Activated CD4-positive, alpha-beta T cell treated with anti-CD3 and anti-CD28 coated beads for 36 hours (primary cell): ENCODE measurements at regions of chr3 and their contacts with region 1.

Region 1: GRCh38 chr3:132180337-132180791 is 136.8 kb upstream of the ACP3 start:
- DNase-seq: no peak
- ATAC-seq: peak; percentile 30
- H3K4me3 Mint-ChIP-seq: no peak overlapping the region
- H3K27ac Mint-ChIP-seq: no peak overlapping the region
- H3K4me1 Mint-ChIP-seq: peaks cover 3% of the 10 kb centered on the region
- H3K27me3 Mint-ChIP-seq: peaks cover 6% of the 10 kb centered on the region

Region 2: GRCh38 chr3:131549340-131549739 is 631.0 kb before region 1 on chr3:
- CTCF ChIA-PET with region 1: no interaction called
- POLR2A ChIA-PET with region 1: no interaction called
- intact Hi-C with region 1: loop called in 1 of 2 experiments (anchors 5 kb)
- DNase-seq: peak; percentile 40
- ATAC-seq: no peak
- H3K4me3 Mint-ChIP-seq: no peak overlapping the region
- H3K27ac Mint-ChIP-seq: no peak overlapping the region
- H3K4me1 Mint-ChIP-seq: no peaks in the 10 kb centered on the region
- H3K27me3 Mint-ChIP-seq: peaks cover 17% of the 10 kb centered on the region

Region 3: DNA sequence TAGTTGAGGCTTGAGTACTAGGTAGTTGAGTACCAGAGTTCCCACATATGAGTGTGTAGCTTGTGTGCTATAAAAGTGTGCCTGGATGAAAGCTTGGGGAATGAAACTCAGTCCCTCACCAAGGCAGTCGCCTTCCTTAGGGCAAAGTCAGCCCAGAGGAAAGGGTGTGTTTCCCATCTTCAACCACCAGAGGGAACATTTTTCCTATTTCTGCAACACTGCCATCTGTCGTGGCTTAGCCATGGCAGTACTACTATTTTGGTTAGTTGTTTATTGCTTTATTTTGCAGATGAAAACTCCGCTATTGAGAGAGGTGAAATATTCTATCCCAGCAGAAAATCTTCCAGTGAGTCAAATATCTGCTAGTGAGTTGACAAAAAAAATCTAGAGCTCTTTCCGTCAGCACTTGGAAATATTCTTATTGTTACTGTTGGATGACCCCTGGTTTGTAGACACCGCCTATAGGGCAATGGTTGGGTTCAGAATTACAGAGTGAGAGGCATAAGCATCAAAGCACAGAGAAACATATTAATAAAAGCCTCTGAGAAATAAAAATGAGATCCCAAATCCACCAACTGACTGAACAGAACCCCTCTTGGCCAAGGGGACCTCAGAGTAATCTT is 385.5 kb before region 1 on chr3:
- CTCF ChIA-PET with region 1: interaction called, 3 read pairs
- POLR2A ChIA-PET with region 1: no interaction called
- intact Hi-C with region 1: loop called (anchors 1 to 5 kb)
- DNase-seq: peak; percentile 37
- ATAC-seq: peak; percentile 70
- H3K4me3 Mint-ChIP-seq: no peak overlapping the region
- H3K27ac Mint-ChIP-seq: no peak overlapping the region
- H3K4me1 Mint-ChIP-seq: peaks cover 9% of the 10 kb centered on the region
- H3K27me3 Mint-ChIP-seq: peaks cover 4% of the 10 kb centered on the region

Region 4: GRCh38 chr3:132034486-132035464 is 145.6 kb before region 1 on chr3 and contains the start of gene CPNE4:
- CTCF ChIA-PET with region 1: interaction called, 7 read pairs
- POLR2A ChIA-PET with region 1: no interaction called
- intact Hi-C with region 1: loop called (anchors 1 to 2 kb)
- DNase-seq: peak; percentile 91
- ATAC-seq: peak; percentile 97
- H3K4me3 Mint-ChIP-seq: peak within 1 kb of the TSS; percentile 33
- H3K27ac Mint-ChIP-seq: no peak within 1 kb of the TSS
- H3K4me1 Mint-ChIP-seq: peaks cover 12% of the 10 kb centered on the region
- H3K27me3 Mint-ChIP-seq: peaks cover 62% of the 10 kb centered on the region
- total RNA-seq, gene CPNE4: not detected

Region 5: DNA sequence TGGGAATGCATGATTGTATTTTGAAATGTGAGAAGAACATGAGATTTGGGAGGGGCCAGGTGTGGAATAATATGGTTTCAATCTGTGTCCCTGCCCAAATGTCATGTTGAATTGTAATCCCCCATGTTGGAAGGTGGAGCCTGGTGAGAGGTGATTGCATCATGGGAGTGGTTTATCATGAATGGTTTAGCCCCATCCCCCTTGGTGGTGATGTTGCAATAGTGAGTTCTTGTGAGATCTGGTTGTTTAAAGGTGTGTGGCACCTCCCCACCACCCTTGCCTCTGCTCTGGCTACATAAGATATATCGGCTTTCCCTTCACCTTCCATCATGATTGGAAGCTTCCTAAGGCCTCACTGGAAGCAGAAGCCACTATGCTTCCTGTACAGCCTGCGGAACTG is 833.9 kb after region 1 on chr3:
- CTCF ChIA-PET with region 1: no interaction called
- POLR2A ChIA-PET with region 1: no interaction called
- intact Hi-C with region 1: no loop called
- DNase-seq: no peak
- ATAC-seq: no peak
- H3K4me3 Mint-ChIP-seq: no peak overlapping the region
- H3K27ac Mint-ChIP-seq: no peak overlapping the region
- H3K4me1 Mint-ChIP-seq: no peaks in the 10 kb centered on the region
- H3K27me3 Mint-ChIP-seq: peaks cover 9% of the 10 kb centered on the region